ENCODE measurements at regions of chr10 and their contacts with region 1.

Region 1: GRCh38 chr10:86521678-86522509 is at the start of gene WAPL:
- DNase-seq: peak; percentile 86 to 96 (median 94)
- ATAC-seq: peak; percentile 95
- H3K4me3 ChIP-seq: peak within 1 kb of the TSS; percentile 61 to 92
- H3K4me3 Mint-ChIP-seq: peak within 1 kb of the TSS; percentile 90
- H3K27ac ChIP-seq: peak within 1 kb of the TSS; percentile 77 to 80
- H3K27ac Mint-ChIP-seq: peak within 1 kb of the TSS; percentile 96
- H3K4me1 ChIP-seq: peaks cover 47% of the 10 kb centered on the region
- H3K4me1 Mint-ChIP-seq: peaks cover 68% of the 10 kb centered on the region
- H3K27me3 ChIP-seq: no peaks in the 10 kb centered on the region
- H3K27me3 Mint-ChIP-seq: no peaks in the 10 kb centered on the region
- CTCF ChIP-seq: no peak
- total RNA-seq, gene WAPL: 35.3 to 36.0 TPM

Region 2: GRCh38 chr10:86411281-86411841 is 110.5 kb before region 1 on chr10:
- CTCF ChIA-PET with region 1: no interaction called
- POLR2A ChIA-PET with region 1: interaction called, 3 read pairs
- intact Hi-C with region 1: loop called in 1 of 2 experiments (anchors 2 kb)
- DNase-seq: peak in 6 of 9 experiments; percentile 14 to 64 (median 31)
- ATAC-seq: peak; percentile 54
- H3K4me3 ChIP-seq: no peak overlapping the region
- H3K4me3 Mint-ChIP-seq: peak overlapping the region; percentile 74
- H3K27ac ChIP-seq: peak overlapping the region; percentile 6 to 64
- H3K27ac Mint-ChIP-seq: peak overlapping the region; percentile 83
- H3K4me1 ChIP-seq: peaks cover 51% of the 10 kb centered on the region
- H3K4me1 Mint-ChIP-seq: peaks cover 51% of the 10 kb centered on the region
- H3K27me3 ChIP-seq: no peaks in the 10 kb centered on the region
- H3K27me3 Mint-ChIP-seq: no peaks in the 10 kb centered on the region
- CTCF ChIP-seq: no peak

Region 3: DNA sequence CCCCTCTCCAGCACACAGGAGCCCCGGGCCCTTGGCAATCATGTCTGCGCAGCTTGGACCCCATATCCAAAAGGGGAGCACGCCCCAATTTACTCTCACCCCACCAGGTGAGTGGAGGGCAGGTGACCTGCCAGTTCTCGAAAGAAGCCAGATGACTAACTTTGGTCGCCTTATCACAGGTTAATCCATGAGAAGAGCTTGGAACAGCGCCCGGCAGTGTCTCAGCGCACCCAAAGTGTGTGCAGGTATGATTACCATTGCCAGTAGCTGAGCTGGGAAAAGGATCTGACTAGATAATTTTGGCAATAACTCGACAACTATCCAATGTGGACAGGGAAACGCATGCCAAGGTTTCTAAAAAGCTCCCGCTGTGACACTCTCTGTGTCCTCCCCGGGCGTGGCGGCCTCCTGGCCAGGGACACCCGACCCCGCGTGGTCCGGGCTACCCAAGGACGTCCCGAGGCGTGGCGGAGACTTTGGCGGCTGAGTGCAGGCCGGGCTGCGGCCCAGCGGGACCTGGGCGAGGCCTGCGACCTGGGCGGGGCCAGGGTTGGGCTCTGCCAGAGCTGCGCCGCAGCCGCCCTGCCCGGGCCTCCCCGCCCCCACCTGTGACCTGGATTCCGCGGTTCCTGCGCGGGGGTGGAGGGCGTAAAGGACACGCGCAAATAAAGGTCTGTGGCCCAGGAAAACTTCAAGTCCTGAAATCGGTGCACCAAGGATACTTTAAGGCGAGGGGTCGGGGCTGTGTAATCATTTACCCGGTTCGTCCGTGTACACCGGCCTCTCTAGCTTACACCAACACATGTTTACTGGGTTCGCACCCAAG is 13.4 kb after region 1 on chr10:
- CTCF ChIA-PET with region 1: no interaction called
- POLR2A ChIA-PET with region 1: interaction called, 16 read pairs
- intact Hi-C with region 1: loop called (anchors 1 kb)
- DNase-seq: peak in 5 of 9 experiments; percentile 13 to 58 (median 37)
- ATAC-seq: no peak
- H3K4me3 ChIP-seq: peak overlapping the region in 1 of 2 experiments; percentile 32
- H3K4me3 Mint-ChIP-seq: peak overlapping the region; percentile 62
- H3K27ac ChIP-seq: no peak overlapping the region
- H3K27ac Mint-ChIP-seq: peak overlapping the region; percentile 64
- H3K4me1 ChIP-seq: peaks cover 22% of the 10 kb centered on the region
- H3K4me1 Mint-ChIP-seq: peaks cover 33% of the 10 kb centered on the region
- H3K27me3 ChIP-seq: no peaks in the 10 kb centered on the region
- H3K27me3 Mint-ChIP-seq: no peaks in the 10 kb centered on the region
- CTCF ChIP-seq: no peak

Region 4: GRCh38 chr10:86710987-86711512 is 189.2 kb after region 1 on chr10:
- CTCF ChIA-PET with region 1: no interaction called
- POLR2A ChIA-PET with region 1: interaction called, 3 read pairs
- intact Hi-C with region 1: loop called (anchors 2 to 5 kb)
- DNase-seq: peak; percentile 74 to 92 (median 82)
- ATAC-seq: peak; percentile 91
- H3K4me3 ChIP-seq: peak overlapping the region; percentile 48 to 66
- H3K4me3 Mint-ChIP-seq: peak overlapping the region; percentile 88
- H3K27ac ChIP-seq: peak overlapping the region; percentile 74 to 81
- H3K27ac Mint-ChIP-seq: peak overlapping the region; percentile 96
- H3K4me1 ChIP-seq: peaks cover 15% of the 10 kb centered on the region
- H3K4me1 Mint-ChIP-seq: peaks cover 13% of the 10 kb centered on the region
- H3K27me3 ChIP-seq: no peaks in the 10 kb centered on the region
- H3K27me3 Mint-ChIP-seq: no peaks in the 10 kb centered on the region
- CTCF ChIP-seq: peak; percentile 67

Region 5: GRCh38 chr10:86971232-86971991 is 449.5 kb after region 1 on chr10:
- CTCF ChIA-PET with region 1: no interaction called
- POLR2A ChIA-PET with region 1: no interaction called
- intact Hi-C with region 1: loop called in 1 of 2 experiments (anchors 10 kb)
- DNase-seq: peak; percentile 87 to 95 (median 91)
- ATAC-seq: peak; percentile 86
- H3K4me3 ChIP-seq: peak overlapping the region; percentile 61 to 66
- H3K4me3 Mint-ChIP-seq: peak overlapping the region; percentile 78
- H3K27ac ChIP-seq: peak overlapping the region; percentile 80 to 89
- H3K27ac Mint-ChIP-seq: peak overlapping the region; percentile 91
- H3K4me1 ChIP-seq: peaks cover 50% of the 10 kb centered on the region
- H3K4me1 Mint-ChIP-seq: peaks cover 31% of the 10 kb centered on the region
- H3K27me3 ChIP-seq: no peaks in the 10 kb centered on the region
- H3K27me3 Mint-ChIP-seq: no peaks in the 10 kb centered on the region
- CTCF ChIP-seq: no peak

Measured in CD8-positive, alpha-beta T cell (primary cell).